Breast epithelium (tissue), 4 donors: ENCODE measurements at regions of chr5 and their contacts with region 1.

Region 1: DNA sequence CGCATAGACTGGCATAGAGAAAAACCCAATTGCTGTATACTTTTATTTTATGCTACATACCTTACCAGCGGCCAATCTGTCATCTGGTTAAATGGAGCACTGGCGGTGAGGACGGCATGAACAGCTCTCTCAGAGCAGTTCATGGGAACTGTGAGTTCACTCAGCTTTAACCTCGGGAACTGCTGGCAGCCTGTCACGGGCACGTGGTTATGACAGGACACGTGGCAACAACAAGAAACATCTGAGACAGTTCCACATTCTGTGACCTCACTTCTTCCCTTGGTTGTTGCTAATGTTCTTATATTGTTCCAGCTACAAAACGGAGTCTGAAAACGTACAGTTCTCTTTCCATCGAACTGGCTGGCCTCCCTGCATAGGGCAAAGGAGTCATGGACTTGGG is 246.2 kb upstream of the DAP start:
- DNase-seq: no peak
- H3K4me3 ChIP-seq: no peak overlapping the region
- H3K27ac ChIP-seq: no peak overlapping the region
- H3K4me1 ChIP-seq: no peaks in the 10 kb centered on the region
- H3K27me3 ChIP-seq: no peaks in the 10 kb centered on the region
- CTCF ChIP-seq: no peak
- POLR2A ChIP-seq: no peak

Region 2: GRCh38 chr5:10563945-10564837 is 443.1 kb before region 1 on chr5 and contains the start of gene ANKRD33B:
- intact Hi-C with region 1: no loop called
- DNase-seq: no peak
- H3K4me3 ChIP-seq: peak within 1 kb of the TSS; percentile 62 to 86 (median 69)
- H3K27ac ChIP-seq: peak within 1 kb of the TSS; percentile 50 to 88
- H3K4me1 ChIP-seq: peaks cover 0 to 6% of the 10 kb centered on the region in 2 donors
- H3K27me3 ChIP-seq: peaks cover 3 to 22% of the 10 kb centered on the region in 2 donors
- CTCF ChIP-seq: no peak
- POLR2A ChIP-seq: no peak
- total RNA-seq, gene ANKRD33B: 3.3 to 5.3 (median 3.8) TPM

Region 3: GRCh38 chr5:10934783-10935355 is 72.4 kb before region 1 on chr5:
- intact Hi-C with region 1: loop called (anchors 2 kb)
- DNase-seq: no peak
- H3K4me3 ChIP-seq: no peak overlapping the region
- H3K27ac ChIP-seq: no peak overlapping the region
- H3K4me1 ChIP-seq: no peaks in the 10 kb centered on the region
- H3K27me3 ChIP-seq: no peaks in the 10 kb centered on the region
- CTCF ChIP-seq: no peak
- POLR2A ChIP-seq: no peak